ENCODE measurements at regions of chr9 and their contacts with region 1.

Region 1: GRCh38 chr9:112717661-112718341 is at the start of gene INIP:
- DNase-seq: peak; percentile 97
- ATAC-seq: peak; percentile 99 to 100
- total RNA-seq, gene INIP: 16.6 TPM

Region 2: GRCh38 chr9:112486221-112487007 is 231.4 kb before region 1 on chr9 and contains the start of gene KIAA1958:
- intact Hi-C with region 1: loop called in 1 of 2 experiments (anchors 10 kb)
- DNase-seq: peak; percentile 90
- ATAC-seq: peak; percentile 91 to 97
- total RNA-seq, gene KIAA1958: 3.3 to 3.6 TPM

Region 3: GRCh38 chr9:112750111-112750767 is 32.4 kb after region 1 on chr9 and contains the start of gene SNX30:
- intact Hi-C with region 1: loop called in 1 of 2 experiments (anchors 2 kb)
- DNase-seq: peak; percentile 90
- ATAC-seq: peak; percentile 94 to 95
- total RNA-seq, gene SNX30: 4.6 to 5.1 TPM

Measured in left cardiac atrium (tissue), 4 donors.